T-cell (primary cell): ENCODE measurements at regions of chr1 and their contacts with region 1.

Region 1: GRCh38 chr1:172398970-172399755 is 21.3 kb upstream of the C1orf105 start:
- DNase-seq: peak in 14 of 35 experiments; percentile 4 to 64 (median 15)
- ATAC-seq: peak; percentile 61 to 73 (median 68)
- H3K4me3 ChIP-seq: no peak overlapping the region
- H3K4me3 Mint-ChIP-seq: peak overlapping the region; percentile 35 to 61 (median 59)
- H3K27ac ChIP-seq: no peak overlapping the region
- H3K27ac Mint-ChIP-seq: peak overlapping the region; percentile 82 to 87
- H3K4me1 ChIP-seq: peaks cover 22 to 49% of the 10 kb centered on the region in 2 experiments
- H3K4me1 Mint-ChIP-seq: peaks cover 63 to 78% (median 74%) of the 10 kb centered on the region in 3 donors
- H3K27me3 ChIP-seq: no peaks in the 10 kb centered on the region
- H3K27me3 Mint-ChIP-seq: no peaks in the 10 kb centered on the region

Region 2: DNA sequence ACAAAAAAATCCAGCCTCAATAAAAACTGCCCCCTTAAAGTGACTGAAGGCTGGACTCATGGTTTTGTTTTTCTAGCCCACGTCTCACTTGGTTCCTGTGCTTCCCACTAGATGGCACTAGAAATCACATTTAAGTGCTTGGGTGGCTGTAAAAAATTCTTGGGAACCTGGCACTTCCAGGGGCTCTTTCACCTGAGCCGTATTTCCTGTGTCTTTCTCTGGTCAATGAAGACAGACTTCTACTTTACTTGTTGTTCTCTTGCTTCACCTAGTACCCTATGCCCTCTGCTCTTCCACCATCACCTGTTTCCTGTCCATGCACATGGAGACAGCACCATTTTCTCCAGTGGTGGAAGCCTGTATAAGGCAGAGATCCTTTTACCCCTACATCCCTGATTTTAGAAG is 597.7 kb before region 1 on chr1:
- CTCF ChIA-PET with region 1: interaction called in 1 of 2 experiments, 10 read pairs
- POLR2A ChIA-PET with region 1: no interaction called
- DNase-seq: peak in 1 of 35 experiments; percentile 56
- ATAC-seq: peak in 2 of 4 experiments; percentile 31 to 40
- H3K4me3 ChIP-seq: no peak overlapping the region
- H3K4me3 Mint-ChIP-seq: no peak overlapping the region
- H3K27ac ChIP-seq: no peak overlapping the region
- H3K27ac Mint-ChIP-seq: no peak overlapping the region
- H3K4me1 ChIP-seq: no peaks in the 10 kb centered on the region
- H3K4me1 Mint-ChIP-seq: peaks cover 2 to 8% (median 8%) of the 10 kb centered on the region in 3 donors
- H3K27me3 ChIP-seq: no peaks in the 10 kb centered on the region
- H3K27me3 Mint-ChIP-seq: no peaks in the 10 kb centered on the region

Region 3: GRCh38 chr1:172089768-172090510 is 309.2 kb before region 1 on chr1:
- CTCF ChIA-PET with region 1: interaction called, 9 to 28 read pairs
- POLR2A ChIA-PET with region 1: no interaction called
- DNase-seq: peak; percentile 12 to 76 (median 49)
- ATAC-seq: peak; percentile 79 to 91 (median 83)
- H3K4me3 ChIP-seq: no peak overlapping the region
- H3K4me3 Mint-ChIP-seq: no peak overlapping the region
- H3K27ac ChIP-seq: no peak overlapping the region
- H3K27ac Mint-ChIP-seq: no peak overlapping the region
- H3K4me1 ChIP-seq: no peaks in the 10 kb centered on the region
- H3K4me1 Mint-ChIP-seq: peaks cover 4 to 7% (median 6%) of the 10 kb centered on the region in 3 donors
- H3K27me3 ChIP-seq: no peaks in the 10 kb centered on the region
- H3K27me3 Mint-ChIP-seq: peaks cover 0 to 2% of the 10 kb centered on the region in 2 donors

Region 4: GRCh38 chr1:172211221-172211620 is 187.9 kb before region 1 on chr1:
- CTCF ChIA-PET with region 1: no interaction called
- POLR2A ChIA-PET with region 1: interaction called in 1 of 2 experiments, 15 read pairs
- DNase-seq: no peak
- ATAC-seq: no peak
- H3K4me3 ChIP-seq: no peak overlapping the region
- H3K4me3 Mint-ChIP-seq: no peak overlapping the region
- H3K27ac ChIP-seq: no peak overlapping the region
- H3K27ac Mint-ChIP-seq: no peak overlapping the region
- H3K4me1 ChIP-seq: no peaks in the 10 kb centered on the region
- H3K4me1 Mint-ChIP-seq: peaks cover 0 to 6% (median 0%) of the 10 kb centered on the region in 3 donors
- H3K27me3 ChIP-seq: no peaks in the 10 kb centered on the region
- H3K27me3 Mint-ChIP-seq: no peaks in the 10 kb centered on the region

Region 5: GRCh38 chr1:172380441-172381244 is 18.5 kb before region 1 on chr1:
- CTCF ChIA-PET with region 1: interaction called, 3 to 15 read pairs
- POLR2A ChIA-PET with region 1: interaction called, 4 to 7 read pairs
- DNase-seq: peak in 27 of 35 experiments; percentile 6 to 78 (median 31)
- ATAC-seq: peak; percentile 93 to 98 (median 96)
- H3K4me3 ChIP-seq: peak overlapping the region in 1 of 2 donors; percentile 16
- H3K4me3 Mint-ChIP-seq: peak overlapping the region; percentile 49 to 66 (median 59)
- H3K27ac ChIP-seq: peak overlapping the region; percentile 89
- H3K27ac Mint-ChIP-seq: peak overlapping the region; percentile 94 to 98
- H3K4me1 ChIP-seq: peaks cover 0 to 30% of the 10 kb centered on the region in 2 experiments
- H3K4me1 Mint-ChIP-seq: peaks cover 28 to 46% (median 33%) of the 10 kb centered on the region in 3 donors
- H3K27me3 ChIP-seq: no peaks in the 10 kb centered on the region
- H3K27me3 Mint-ChIP-seq: no peaks in the 10 kb centered on the region